ENCODE measurements at regions of chr2 and their contacts with region 1.

Region 1: GRCh38 chr2:176826984-176827668 is 385.5 kb upstream of the HNRNPA3 start:
- DNase-seq: peak; percentile 80
- ATAC-seq: peak; percentile 51
- H3K4me3 Mint-ChIP-seq: peak overlapping the region; percentile 20
- H3K27ac Mint-ChIP-seq: peak overlapping the region; percentile 85
- H3K4me1 Mint-ChIP-seq: peaks cover 35% of the 10 kb centered on the region
- H3K27me3 Mint-ChIP-seq: peaks cover 2% of the 10 kb centered on the region

Region 2: GRCh38 chr2:176931588-176932563 is 104.8 kb after region 1 on chr2:
- CTCF ChIA-PET with region 1: no interaction called
- POLR2A ChIA-PET with region 1: no interaction called
- intact Hi-C with region 1: loop called in 1 of 2 experiments (anchors 2 kb)
- DNase-seq: peak; percentile 42
- ATAC-seq: peak; percentile 96
- H3K4me3 Mint-ChIP-seq: no peak overlapping the region
- H3K27ac Mint-ChIP-seq: peak overlapping the region; percentile 59
- H3K4me1 Mint-ChIP-seq: peaks cover 10% of the 10 kb centered on the region
- H3K27me3 Mint-ChIP-seq: peaks cover 2% of the 10 kb centered on the region

Region 3: DNA sequence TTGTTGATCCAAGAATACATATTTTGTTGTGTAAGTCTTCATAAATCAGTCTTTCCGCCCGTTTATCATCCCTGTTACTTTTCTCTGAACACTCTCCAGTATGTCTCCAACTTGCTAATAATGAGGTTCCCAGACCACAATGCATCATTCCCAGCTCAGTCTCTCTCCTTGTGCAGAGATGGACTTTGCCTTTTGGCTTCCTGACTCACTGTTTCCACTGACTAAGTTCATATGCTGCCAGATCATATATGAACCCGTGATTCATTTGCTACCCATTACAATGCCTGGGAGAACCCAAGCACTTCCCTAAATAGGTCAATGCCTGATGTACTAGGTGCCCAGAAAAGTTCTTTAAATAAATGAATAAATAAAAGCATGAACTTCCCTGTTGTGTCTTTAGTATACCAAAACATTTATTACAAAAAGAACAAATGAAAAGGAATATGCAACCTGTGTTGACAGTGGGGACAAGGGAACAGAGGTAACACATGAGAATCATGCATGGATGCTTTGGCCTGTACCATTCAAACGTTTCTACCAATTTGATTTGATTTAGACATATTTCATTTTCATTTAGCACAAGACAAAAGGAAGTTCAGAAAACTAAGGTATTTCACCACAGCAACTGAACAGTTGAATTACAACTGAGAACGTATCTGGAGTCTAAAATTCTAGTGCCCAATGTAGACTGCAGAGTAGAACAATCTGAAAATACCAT is 170.1 kb after region 1 on chr2:
- CTCF ChIA-PET with region 1: interaction called, 3 read pairs
- POLR2A ChIA-PET with region 1: no interaction called
- intact Hi-C with region 1: loop called (anchors 2 kb)
- DNase-seq: peak; percentile 43
- ATAC-seq: peak; percentile 87
- H3K4me3 Mint-ChIP-seq: no peak overlapping the region
- H3K27ac Mint-ChIP-seq: peak overlapping the region; percentile 51
- H3K4me1 Mint-ChIP-seq: peaks cover 30% of the 10 kb centered on the region
- H3K27me3 Mint-ChIP-seq: no peaks in the 10 kb centered on the region

Region 4: GRCh38 chr2:177207101-177207500 is 380.0 kb after region 1 on chr2:
- CTCF ChIA-PET with region 1: no interaction called
- POLR2A ChIA-PET with region 1: no interaction called
- intact Hi-C with region 1: loop called in 1 of 2 experiments (anchors 2 kb)
- DNase-seq: no peak
- ATAC-seq: peak; percentile 57
- H3K4me3 Mint-ChIP-seq: no peak overlapping the region
- H3K27ac Mint-ChIP-seq: peak overlapping the region; percentile 34
- H3K4me1 Mint-ChIP-seq: peaks cover 26% of the 10 kb centered on the region
- H3K27me3 Mint-ChIP-seq: no peaks in the 10 kb centered on the region